ENCODE measurements at regions of chr17 and their contacts with region 1.

Region 1: GRCh38 chr17:45997624-45998023 is 1.4 kb upstream of the STH start:
- DNase-seq: no peak
- H3K4me3 ChIP-seq: no peak overlapping the region
- CTCF ChIP-seq: no peak

Region 2: DNA sequence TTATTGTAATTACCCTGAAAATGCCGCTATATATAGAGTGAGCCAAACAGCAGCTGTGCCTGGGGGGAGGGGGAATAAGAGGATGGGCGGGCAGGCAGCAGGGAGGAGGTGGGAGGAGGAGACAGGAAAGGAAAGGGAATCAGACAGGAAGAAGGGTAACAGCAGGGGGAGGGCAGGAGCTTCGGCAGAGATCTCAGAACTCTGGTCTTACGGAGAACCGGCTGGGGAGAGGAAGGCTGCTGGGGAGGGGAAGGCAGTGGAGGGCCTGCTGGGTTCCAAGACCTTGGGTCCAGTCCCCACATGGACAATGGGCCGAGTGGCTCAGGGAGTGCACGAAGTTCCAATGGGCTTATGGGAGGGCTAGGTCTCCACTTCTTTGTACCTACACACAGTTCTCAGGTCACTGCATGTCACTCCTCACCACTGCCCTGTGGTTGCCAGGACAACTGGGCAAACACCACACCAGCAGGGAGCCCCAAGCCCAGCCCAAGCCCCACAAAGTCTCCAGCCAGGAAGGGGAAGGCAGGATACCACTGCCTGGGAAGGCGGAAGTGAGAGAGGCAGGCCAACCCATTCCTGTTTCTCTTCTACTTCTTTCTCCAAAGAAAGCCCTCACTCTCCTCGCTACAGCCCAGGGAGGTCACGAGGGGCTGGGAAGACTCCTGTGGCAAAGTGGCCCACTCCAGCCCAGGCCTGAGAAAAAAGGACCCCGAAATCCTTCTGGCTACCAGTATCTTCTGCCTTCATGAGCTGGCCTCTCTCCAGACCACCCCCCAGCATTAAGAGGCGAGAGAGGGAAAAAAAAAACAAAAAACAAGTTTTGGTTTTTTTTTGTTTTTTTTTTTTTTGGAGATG is 1901.8 kb before region 1 on chr17:
- in situ Hi-C with region 1: no loop called
- DNase-seq: peak; percentile 75
- H3K4me3 ChIP-seq: peak overlapping the region; percentile 18
- CTCF ChIP-seq: peak; percentile 34

Region 3: DNA sequence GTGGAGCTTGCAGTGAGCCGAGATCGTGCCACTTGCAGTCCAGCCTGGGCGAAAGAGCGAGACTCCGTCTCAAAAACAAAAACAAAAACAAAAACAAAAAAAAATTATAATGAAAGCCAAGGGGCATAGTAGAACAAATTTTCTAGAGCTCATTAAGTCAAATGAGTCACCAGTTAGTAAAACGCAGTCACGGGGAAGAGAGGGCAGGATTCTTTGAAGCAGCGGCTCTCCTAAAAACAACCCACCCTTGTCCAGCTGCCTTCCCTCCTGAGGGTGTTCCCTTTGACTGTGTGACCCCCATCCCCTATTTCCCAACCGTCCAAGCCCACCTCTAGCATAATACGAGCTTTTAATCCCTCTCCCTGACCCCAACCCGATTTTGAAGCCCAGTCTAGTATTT is 42.7 kb before region 1 on chr17:
- in situ Hi-C with region 1: no loop called
- DNase-seq: no peak
- H3K4me3 ChIP-seq: no peak overlapping the region
- CTCF ChIP-seq: no peak

Region 4: DNA sequence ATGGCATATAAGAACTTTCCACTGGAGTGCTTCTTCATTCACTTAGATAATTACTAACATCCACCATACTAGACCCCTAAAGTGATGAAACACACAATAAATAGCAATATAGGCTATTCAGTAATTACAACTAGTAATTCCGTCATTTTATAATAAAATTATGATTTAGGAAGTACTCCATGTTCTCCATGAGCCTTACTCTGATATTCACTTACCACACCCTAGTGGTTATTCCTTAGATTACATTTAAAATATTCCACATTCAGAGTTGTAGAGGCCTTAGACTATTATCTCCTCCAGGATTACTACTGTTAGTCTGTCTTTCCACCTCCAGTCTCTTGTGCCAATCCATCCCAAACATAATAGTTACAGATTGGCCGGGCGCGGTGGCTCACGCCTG is 63.8 kb after region 1 on chr17:
- in situ Hi-C with region 1: loop called (anchors 5 kb)
- DNase-seq: no peak
- H3K4me3 ChIP-seq: no peak overlapping the region
- CTCF ChIP-seq: no peak

Measured in astrocyte of the cerebellum (primary cell).